ENCODE measurements at regions of chr11 and their contacts with region 1.

Region 1: DNA sequence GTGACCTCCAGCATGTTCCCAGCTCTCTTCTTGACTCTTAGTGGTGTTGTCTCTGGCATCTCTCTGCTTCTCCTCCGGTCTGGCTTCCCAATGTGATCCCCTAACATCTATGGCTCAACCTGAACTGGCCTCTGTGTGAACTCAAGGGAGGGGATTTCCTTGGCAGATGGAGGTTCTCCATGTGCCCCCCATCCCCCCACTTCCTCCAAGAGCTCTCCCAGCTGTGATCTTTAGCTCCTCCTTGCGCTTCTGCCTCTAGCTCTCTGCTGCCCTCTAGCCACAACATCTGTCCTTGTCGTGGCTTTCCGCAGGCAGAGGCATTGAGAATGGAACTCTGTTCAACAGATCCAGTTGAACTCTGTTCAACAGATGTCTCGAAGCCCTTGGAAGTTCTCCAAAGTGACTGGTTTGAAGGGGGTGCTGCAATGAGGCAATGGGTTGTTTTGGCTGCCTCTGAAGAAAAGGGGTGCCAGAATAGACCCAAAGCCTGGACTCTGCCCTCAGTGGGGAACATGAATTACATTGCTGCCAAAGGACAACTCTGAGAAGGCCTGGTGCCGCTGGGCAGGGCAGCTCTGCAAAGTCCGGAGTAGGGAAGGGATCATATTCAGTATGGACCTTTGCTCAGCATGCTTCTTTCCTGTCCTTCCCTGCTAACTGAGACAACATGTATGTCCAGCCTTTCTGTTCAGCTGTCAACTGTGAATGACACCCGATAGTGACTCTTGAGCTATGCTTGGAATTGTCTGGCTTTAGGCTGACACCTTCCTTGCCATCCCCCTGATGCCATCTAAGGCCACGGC is 61.9 kb downstream of the ADM start:
- DNase-seq: peak; percentile 67 to 73
- H3K4me3 ChIP-seq: no peak overlapping the region
- H3K27ac ChIP-seq: no peak overlapping the region
- H3K4me1 ChIP-seq: no peaks in the 10 kb centered on the region
- H3K27me3 ChIP-seq: no peaks in the 10 kb centered on the region
- CTCF ChIP-seq: peak; percentile 80

Region 2: GRCh38 chr11:10208131-10208575 is 158.6 kb before region 1 on chr11:
- CTCF ChIA-PET with region 1: no interaction called
- POLR2A ChIA-PET with region 1: no interaction called
- intact Hi-C with region 1: loop called (anchors 5 kb)
- DNase-seq: no peak
- H3K4me3 ChIP-seq: no peak overlapping the region
- H3K27ac ChIP-seq: no peak overlapping the region
- H3K4me1 ChIP-seq: 0 out of 2 replicates have a peak, but pooled peaks cover 3% of the 10 kb centered on the region
- H3K27me3 ChIP-seq: no peaks in the 10 kb centered on the region
- CTCF ChIP-seq: peak; percentile 75

Region 3: DNA sequence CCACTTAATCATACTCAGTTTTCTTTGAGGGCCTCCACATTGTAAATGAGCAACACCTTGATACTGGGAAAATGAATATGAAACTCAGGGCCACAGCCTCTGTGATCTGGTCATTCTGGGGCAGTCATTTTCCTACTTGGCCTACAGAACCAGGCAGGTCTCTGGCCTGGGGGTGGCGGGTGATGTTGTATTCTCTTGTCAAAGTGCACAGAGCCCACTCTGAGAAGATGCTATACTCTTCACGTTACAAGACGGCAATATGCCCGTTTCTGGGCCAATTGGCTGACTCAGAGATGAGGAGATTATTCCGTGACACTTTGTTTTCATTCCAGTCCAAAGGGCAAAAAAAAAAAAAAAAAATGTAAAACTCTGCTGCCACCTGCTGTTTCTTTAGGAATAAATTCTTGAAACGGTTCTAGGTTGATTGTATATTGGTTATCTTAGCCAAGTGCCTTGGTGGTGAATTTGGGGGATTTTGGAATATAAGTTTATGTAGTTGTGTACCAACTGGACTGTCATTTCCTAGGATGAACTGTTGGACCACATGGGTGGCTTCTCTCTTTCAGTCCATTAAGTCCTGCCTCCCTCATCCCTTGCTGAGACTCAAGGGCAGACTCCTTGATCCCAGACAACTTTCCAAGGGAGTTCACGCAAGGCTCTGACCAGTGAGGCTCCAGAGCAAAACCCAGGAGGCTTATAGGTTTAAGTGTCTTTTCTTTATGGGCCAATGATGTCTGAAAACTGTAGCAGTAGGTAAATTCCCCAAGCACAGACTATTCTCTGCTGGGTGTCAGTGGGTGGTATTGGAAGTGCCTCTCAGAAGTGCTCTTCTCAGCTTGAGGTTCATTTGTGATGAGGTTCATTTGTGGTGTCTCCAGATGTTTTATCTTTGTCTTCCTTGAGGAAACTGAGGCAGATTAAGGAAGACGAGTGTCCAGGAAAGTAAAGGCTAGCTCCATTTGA is 43.7 kb before region 1 on chr11:
- CTCF ChIA-PET with region 1: interaction called, 6 read pairs
- POLR2A ChIA-PET with region 1: no interaction called
- intact Hi-C with region 1: loop called (anchors 1 kb)
- DNase-seq: peak; percentile 42 to 85
- H3K4me3 ChIP-seq: no peak overlapping the region; the same call in 1 of the 2 replicates
- H3K27ac ChIP-seq: peak overlapping the region; percentile 88
- H3K4me1 ChIP-seq: peaks cover 46% of the 10 kb centered on the region
- H3K27me3 ChIP-seq: no peaks in the 10 kb centered on the region
- CTCF ChIP-seq: peak; percentile 58

Region 4: DNA sequence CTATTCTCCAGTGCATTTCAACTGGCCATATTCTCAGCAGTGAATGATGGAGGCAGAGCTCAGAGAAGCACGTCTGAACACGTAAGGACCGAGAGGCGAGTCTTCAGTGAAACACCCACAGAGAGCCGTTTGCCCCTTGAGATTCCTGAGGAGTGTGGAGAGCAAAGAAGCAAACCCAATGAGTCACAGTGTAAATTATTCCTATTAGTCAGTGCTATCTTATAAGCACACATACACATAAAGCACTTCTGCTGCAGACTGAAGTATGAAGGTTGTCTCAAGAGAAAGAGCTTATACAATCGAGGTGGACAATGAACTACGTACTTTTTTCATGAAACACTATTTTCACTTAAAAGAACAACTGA is 1217.7 kb after region 1 on chr11:
- CTCF ChIA-PET with region 1: no interaction called
- POLR2A ChIA-PET with region 1: no interaction called
- intact Hi-C with region 1: no loop called
- DNase-seq: no peak
- H3K4me3 ChIP-seq: no peak overlapping the region
- H3K27ac ChIP-seq: no peak overlapping the region
- H3K4me1 ChIP-seq: no peaks in the 10 kb centered on the region
- H3K27me3 ChIP-seq: peaks cover 61% of the 10 kb centered on the region
- CTCF ChIP-seq: no peak